H1 (cell line): ENCODE measurements at regions of chr14 and their contacts with region 1.

Region 1: DNA sequence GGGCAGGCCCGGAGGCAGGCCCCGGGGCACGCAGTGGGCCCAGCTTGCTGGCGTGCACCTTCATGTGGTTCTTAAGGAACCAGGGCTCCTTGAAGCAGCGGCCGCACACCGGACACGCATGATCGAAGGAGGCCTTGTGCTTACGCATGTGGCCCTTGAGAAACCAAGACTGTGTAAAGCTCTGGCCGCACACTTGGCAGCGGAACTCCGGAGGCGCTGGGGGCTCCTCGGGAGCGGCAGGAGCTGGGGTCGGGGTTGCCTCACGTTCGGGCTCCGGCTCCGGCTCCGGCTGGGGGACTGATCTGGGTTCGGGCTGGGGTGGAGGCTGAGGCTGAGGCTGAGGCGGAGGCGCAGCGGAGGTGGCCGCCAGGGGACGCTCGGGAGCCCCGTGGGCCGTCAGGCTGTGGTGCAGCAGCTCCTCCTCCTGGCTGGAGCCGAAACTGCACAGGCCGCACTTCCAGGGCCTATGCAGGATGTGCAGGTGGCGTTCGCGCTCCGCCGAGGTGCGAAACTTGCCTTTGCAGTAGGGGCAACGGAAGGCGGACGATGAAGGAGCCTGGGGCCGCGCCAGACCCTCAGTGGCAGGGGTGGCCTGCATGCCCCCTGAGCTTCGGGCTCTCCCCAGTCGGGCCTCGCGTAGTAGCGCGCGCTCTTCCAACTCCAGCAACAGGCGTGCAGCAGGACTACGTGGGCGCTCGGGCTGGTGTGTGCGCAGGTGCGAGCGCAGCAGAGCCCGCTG is 6.0 kb downstream of the ZNF219 start:
- DNase-seq: peak in 1 of 2 experiments; percentile 99
- H3K4me3 ChIP-seq: no peak overlapping the region; a peak in 1 of 8 replicates
- H3K27ac ChIP-seq: peak overlapping the region; percentile 30
- H3K4me1 ChIP-seq: peaks cover 16 to 35% (median 24%) of the 10 kb centered on the region in 4 experiments
- H3K27me3 ChIP-seq: no peaks in the 10 kb centered on the region
- CTCF ChIP-seq: peak; percentile 100
- EP300 ChIP-seq: peak in 1 of 2 experiments; percentile 63; a peak in 1 of 3 replicates
- POLR2A ChIP-seq: peak in 1 of 2 experiments; percentile 68; a peak in 1 of 3 replicates
- RAD21 ChIP-seq: peak; percentile 87 to 92

Region 2: GRCh38 chr14:21057803-21058675 is 34.4 kb before region 1 on chr14 and contains the start of gene RNASE8:
- CTCF ChIA-PET with region 1: interaction called, 13 read pairs
- POLR2A ChIA-PET with region 1: interaction called, 4 read pairs
- DNase-seq: no peak
- H3K4me3 ChIP-seq: no peak within 1 kb of the TSS
- H3K27ac ChIP-seq: no peak within 1 kb of the TSS
- H3K4me1 ChIP-seq: peaks cover 0 to 3% (median 0%) of the 10 kb centered on the region in 4 experiments; a peak in 2 of 7 replicates
- H3K27me3 ChIP-seq: no peaks in the 10 kb centered on the region; a peak in 1 of 7 replicates
- CTCF ChIP-seq: no peak
- EP300 ChIP-seq: no peak
- POLR2A ChIP-seq: no peak
- RAD21 ChIP-seq: no peak
- total RNA-seq, gene RNASE8: not detected in 2 replicates

Region 3: DNA sequence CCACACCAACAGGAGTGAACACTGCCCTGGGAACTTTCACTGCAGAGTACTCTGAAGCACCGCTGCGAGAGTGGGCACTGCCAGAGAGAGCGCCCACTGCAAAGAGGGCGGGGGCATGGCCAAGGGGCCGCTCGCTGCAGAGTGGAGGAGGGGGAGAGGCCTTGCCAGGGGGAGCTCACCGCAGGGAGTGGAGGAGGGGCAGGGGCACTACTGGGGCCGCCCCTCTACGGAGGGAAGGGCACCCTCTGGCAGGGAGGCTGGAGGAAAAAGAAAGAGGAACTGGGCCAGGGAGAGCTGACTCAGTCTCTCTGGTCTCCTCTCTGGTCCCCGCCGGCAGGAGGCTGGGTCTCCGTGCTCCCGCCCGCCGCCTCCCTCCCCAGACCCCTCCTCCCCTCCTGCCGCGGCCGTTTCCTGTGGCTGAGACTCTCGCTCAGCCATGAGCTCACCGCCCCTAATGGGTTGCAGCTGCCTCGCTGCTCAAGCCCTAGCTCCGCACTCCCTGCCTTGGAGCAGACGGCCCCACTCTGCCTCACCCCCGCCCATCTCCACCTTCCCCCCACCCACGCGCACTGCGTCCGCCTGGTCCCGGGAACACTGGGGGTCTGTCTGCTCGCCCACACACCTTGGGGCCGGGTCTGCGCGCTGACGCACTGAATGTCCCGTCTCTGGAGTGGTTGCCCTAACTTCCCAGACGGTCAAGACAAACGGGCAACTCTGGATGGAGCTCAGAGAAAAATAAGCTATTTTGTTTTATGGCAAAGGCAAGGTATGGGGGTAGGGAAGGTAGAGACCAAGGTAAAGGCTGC is 21.0 kb before region 1 on chr14:
- CTCF ChIA-PET with region 1: interaction called, 110 read pairs
- POLR2A ChIA-PET with region 1: interaction called, 245 read pairs
- DNase-seq: no peak
- H3K4me3 ChIP-seq: peak overlapping the region; percentile 52 to 98 (median 82)
- H3K27ac ChIP-seq: peak overlapping the region; percentile 72
- H3K4me1 ChIP-seq: peaks cover 3 to 14% (median 8%) of the 10 kb centered on the region in 4 experiments
- H3K27me3 ChIP-seq: peaks cover 0 to 4% (median 0%) of the 10 kb centered on the region in 4 experiments; a peak in 3 of 7 replicates
- CTCF ChIP-seq: no peak
- EP300 ChIP-seq: no peak
- POLR2A ChIP-seq: peak in 1 of 2 experiments; percentile 73; a peak in 1 of 3 replicates
- RAD21 ChIP-seq: no peak

Region 4: DNA sequence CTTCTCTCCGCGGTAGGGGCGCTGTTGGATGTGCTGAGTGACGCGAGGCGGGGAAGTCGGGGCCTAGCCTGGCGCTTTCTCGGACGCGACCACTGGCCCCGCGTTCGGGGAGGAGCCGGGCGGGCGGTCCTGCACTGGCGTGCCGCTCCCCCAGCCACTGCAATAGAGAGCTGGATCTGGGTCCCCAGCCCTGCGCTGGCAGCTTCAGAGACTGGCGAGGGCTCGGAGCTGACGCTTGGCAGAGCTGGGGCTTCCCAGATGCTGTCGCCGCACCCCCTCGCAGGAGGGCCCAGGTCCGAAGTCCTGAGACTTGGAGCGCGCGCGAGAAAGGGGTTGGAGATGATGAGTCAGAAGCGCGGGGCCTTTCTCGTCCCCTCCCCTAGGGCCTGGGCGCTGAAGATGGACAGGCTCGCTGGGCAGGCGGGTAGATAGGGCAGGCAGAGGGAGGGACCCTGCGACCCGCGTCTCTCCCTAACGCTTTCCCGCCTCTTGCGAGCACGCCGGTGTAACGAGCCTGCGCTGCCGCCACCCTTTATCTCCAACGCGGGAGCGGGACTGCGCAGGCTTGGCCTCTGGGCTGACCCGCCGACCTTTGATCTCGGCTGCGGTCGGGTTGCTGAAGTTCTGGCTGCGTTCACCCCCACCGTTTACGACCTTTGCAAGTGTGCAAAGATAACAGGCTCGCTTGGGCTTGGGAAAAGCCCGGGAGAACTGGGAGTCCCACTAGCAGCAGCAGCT is 11.4 kb after region 1 on chr14:
- CTCF ChIA-PET with region 1: interaction called, 239 read pairs
- POLR2A ChIA-PET with region 1: interaction called, 121 read pairs
- DNase-seq: peak; percentile 80 to 96
- H3K4me3 ChIP-seq: peak overlapping the region; percentile 49 to 83 (median 80)
- H3K27ac ChIP-seq: peak overlapping the region; percentile 99
- H3K4me1 ChIP-seq: peaks cover 2 to 25% (median 9%) of the 10 kb centered on the region in 4 experiments; a peak in 5 of 7 replicates
- H3K27me3 ChIP-seq: no peaks in the 10 kb centered on the region
- CTCF ChIP-seq: peak; percentile 70 to 86 (median 75)
- EP300 ChIP-seq: peak in 1 of 2 experiments; percentile 99; a peak in 2 of 3 replicates
- POLR2A ChIP-seq: peak; percentile 88 to 93
- RAD21 ChIP-seq: peak; percentile 9 to 33; a peak in 3 of 4 replicates